ENCODE measurements at regions of chr11 and their contacts with region 1.

Region 1: GRCh38 chr11:43825217-43825816 is 55.3 kb upstream of the ALKBH3 start:
- DNase-seq: peak; percentile 66
- H3K4me3 Mint-ChIP-seq: no peak overlapping the region
- H3K27ac Mint-ChIP-seq: no peak overlapping the region
- H3K4me1 Mint-ChIP-seq: no peaks in the 10 kb centered on the region
- H3K27me3 Mint-ChIP-seq: no peaks in the 10 kb centered on the region
- CTCF ChIP-seq: peak; percentile 69

Region 2: GRCh38 chr11:43837879-43838278 is 12.6 kb after region 1 on chr11:
- CTCF ChIA-PET with region 1: interaction called, 24 read pairs
- POLR2A ChIA-PET with region 1: interaction called, 5 read pairs
- intact Hi-C with region 1: no loop called
- DNase-seq: no peak
- H3K4me3 Mint-ChIP-seq: no peak overlapping the region
- H3K27ac Mint-ChIP-seq: no peak overlapping the region
- H3K4me1 Mint-ChIP-seq: no peaks in the 10 kb centered on the region
- H3K27me3 Mint-ChIP-seq: peaks cover 10% of the 10 kb centered on the region
- CTCF ChIP-seq: no peak

Region 3: DNA sequence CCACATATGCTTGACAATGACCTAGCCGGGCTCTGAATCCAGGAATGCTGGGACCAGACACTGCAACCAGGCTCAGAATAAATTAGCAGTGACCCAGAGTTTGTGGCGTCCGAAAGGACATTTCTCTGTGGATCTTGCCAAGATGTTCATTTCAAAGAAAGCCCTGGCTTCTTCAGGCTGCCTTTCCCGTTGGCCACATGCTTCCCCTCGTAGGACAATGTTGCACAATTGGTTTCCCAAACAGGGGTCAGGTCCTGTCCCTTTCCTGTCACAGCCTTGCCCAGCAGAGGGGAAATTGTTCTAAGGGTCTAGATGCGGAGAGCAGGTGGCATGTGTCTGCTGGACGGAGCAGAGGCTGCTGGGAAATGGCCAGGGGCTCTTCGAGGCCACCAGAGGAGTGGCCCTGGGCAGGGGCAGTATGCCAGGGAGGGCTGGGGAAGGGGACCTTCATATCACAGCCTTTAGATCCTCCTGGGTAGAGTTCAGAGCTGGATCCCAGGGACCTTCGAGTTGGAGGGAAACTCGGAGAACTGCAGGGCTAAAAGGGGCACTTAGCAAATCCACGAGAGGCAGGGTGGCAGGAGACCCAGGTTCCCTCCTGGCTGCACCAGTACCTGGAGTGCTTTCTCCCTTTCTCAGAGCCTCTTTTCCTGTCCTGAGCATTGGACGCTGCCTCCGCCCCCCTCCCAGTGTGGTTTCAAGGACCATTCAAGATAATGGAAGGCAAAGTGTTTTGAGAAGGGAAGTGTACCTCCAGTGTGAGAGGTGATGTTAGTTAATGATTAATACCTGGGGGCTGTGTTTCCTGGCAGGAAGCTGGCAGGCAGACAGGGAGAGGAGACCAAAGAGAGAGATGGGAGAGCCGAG is 159.4 kb after region 1 on chr11:
- CTCF ChIA-PET with region 1: no interaction called
- POLR2A ChIA-PET with region 1: no interaction called
- intact Hi-C with region 1: no loop called
- DNase-seq: no peak
- H3K4me3 Mint-ChIP-seq: no peak overlapping the region
- H3K27ac Mint-ChIP-seq: no peak overlapping the region
- H3K4me1 Mint-ChIP-seq: peaks cover 6% of the 10 kb centered on the region
- H3K27me3 Mint-ChIP-seq: peaks cover 16% of the 10 kb centered on the region
- CTCF ChIP-seq: no peak

Region 4: DNA sequence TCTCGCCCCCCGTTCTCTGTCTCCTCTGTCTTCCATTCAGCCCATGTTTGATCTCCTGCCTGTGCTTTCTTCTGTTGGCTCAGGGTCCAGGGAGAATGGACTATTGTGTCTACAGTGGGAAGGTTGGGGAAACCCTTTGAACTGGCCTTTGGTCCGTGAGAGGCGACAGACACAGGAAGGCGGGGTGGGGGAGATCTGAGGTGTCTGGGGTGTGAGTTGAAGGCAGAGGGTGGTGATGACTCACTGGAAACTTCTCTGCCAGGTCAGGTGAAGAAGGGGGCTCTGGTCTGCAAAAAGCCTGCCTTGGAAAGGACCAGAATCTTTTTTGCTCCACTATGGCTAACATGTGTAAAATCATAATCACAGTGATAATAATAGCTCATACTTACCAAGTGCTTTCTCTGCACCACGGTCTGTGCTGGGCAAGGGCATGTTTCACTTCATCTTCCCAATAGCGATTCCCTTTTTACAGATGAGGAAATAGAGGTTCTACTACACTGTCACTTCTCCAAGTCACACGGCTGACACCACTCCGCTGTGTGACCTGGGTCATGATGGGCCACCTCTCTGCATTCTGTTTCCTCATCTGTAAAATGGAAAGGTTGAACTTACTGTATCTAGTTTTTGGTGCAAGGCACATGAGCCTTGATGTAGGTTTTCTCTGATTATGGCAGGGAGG is 584.4 kb after region 1 on chr11:
- CTCF ChIA-PET with region 1: no interaction called
- POLR2A ChIA-PET with region 1: no interaction called
- intact Hi-C with region 1: no loop called
- DNase-seq: no peak
- H3K4me3 Mint-ChIP-seq: no peak overlapping the region
- H3K27ac Mint-ChIP-seq: no peak overlapping the region
- H3K4me1 Mint-ChIP-seq: no peaks in the 10 kb centered on the region
- H3K27me3 Mint-ChIP-seq: peaks cover 43% of the 10 kb centered on the region
- CTCF ChIP-seq: no peak

Measured in MCF 10A (cell line).